ENCODE measurements at regions of chr7 and their contacts with region 1.

Region 1: GRCh38 chr7:77823787-77824186 is 25.2 kb downstream of the PHTF2 start:
- DNase-seq: no peak
- ATAC-seq: peak; percentile 34
- H3K4me3 ChIP-seq: peak overlapping the region; percentile 9 to 71 (median 38)
- H3K4me3 Mint-ChIP-seq: peak overlapping the region; percentile 86
- H3K27ac ChIP-seq: peak overlapping the region; percentile 87 to 90
- H3K27ac Mint-ChIP-seq: peak overlapping the region; percentile 98
- H3K4me1 ChIP-seq: peaks cover 58 to 66% of the 10 kb centered on the region in 2 donors
- H3K4me1 Mint-ChIP-seq: peaks cover 70% of the 10 kb centered on the region
- H3K27me3 ChIP-seq: no peaks in the 10 kb centered on the region
- H3K27me3 Mint-ChIP-seq: no peaks in the 10 kb centered on the region
- CTCF ChIP-seq: no peak

Region 2: DNA sequence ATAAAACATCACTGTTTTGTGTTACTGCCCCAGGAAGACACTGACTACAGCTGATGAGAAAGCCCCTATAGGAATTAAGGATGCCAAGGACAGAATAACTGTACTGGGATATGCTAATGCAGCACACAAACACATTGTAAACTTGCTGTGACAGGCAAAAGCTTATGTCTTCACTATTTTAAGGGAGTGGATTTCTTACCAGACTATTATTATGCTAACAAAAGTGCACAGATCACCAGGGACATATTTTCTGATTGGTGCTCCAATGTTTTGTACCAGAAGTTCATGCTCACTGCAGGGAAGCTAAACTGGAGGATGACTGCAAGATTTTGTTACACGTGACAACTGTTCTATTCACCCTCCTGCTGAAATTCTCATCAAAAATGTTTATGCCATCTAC is 334.8 kb before region 1 on chr7:
- CTCF ChIA-PET with region 1: no interaction called
- POLR2A ChIA-PET with region 1: no interaction called
- intact Hi-C with region 1: no loop called
- DNase-seq: no peak
- ATAC-seq: no peak
- H3K4me3 ChIP-seq: no peak overlapping the region
- H3K4me3 Mint-ChIP-seq: no peak overlapping the region
- H3K27ac ChIP-seq: no peak overlapping the region
- H3K27ac Mint-ChIP-seq: no peak overlapping the region
- H3K4me1 ChIP-seq: no peaks in the 10 kb centered on the region
- H3K4me1 Mint-ChIP-seq: no peaks in the 10 kb centered on the region
- H3K27me3 ChIP-seq: peaks cover 0 to 3% (median 0%) of the 10 kb centered on the region in 4 experiments
- H3K27me3 Mint-ChIP-seq: peaks cover 5% of the 10 kb centered on the region
- CTCF ChIP-seq: no peak

Region 3: DNA sequence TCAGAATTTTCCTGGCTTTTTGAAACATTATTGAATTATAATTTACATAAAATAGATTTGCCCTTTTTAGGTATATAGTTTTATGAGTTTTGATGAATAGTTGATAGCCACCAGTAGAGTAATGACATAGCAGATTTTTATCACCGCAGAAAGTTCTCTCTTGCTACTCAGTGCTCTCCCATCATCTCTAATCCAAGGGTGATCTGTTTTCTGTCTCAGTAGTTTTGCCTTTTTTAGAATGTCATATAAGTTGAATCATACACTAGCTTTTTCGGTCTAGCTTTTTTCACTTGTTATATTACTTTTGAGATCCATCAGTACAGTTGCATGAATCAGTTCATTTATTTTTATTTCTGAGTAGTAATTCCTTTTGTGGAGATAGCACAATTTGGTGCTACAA is 109.6 kb before region 1 on chr7:
- CTCF ChIA-PET with region 1: no interaction called
- POLR2A ChIA-PET with region 1: no interaction called
- intact Hi-C with region 1: no loop called
- DNase-seq: no peak
- ATAC-seq: no peak
- H3K4me3 ChIP-seq: no peak overlapping the region
- H3K4me3 Mint-ChIP-seq: no peak overlapping the region
- H3K27ac ChIP-seq: no peak overlapping the region
- H3K27ac Mint-ChIP-seq: no peak overlapping the region
- H3K4me1 ChIP-seq: no peaks in the 10 kb centered on the region
- H3K4me1 Mint-ChIP-seq: peaks cover 45% of the 10 kb centered on the region
- H3K27me3 ChIP-seq: no peaks in the 10 kb centered on the region
- H3K27me3 Mint-ChIP-seq: no peaks in the 10 kb centered on the region
- CTCF ChIP-seq: no peak

Region 4: GRCh38 chr7:77752021-77752420 is 71.8 kb before region 1 on chr7:
- CTCF ChIA-PET with region 1: no interaction called
- POLR2A ChIA-PET with region 1: no interaction called
- intact Hi-C with region 1: no loop called
- DNase-seq: no peak
- ATAC-seq: no peak
- H3K4me3 ChIP-seq: no peak overlapping the region
- H3K4me3 Mint-ChIP-seq: no peak overlapping the region
- H3K27ac ChIP-seq: no peak overlapping the region
- H3K27ac Mint-ChIP-seq: peak overlapping the region; percentile 5
- H3K4me1 ChIP-seq: peaks cover 3 to 4% of the 10 kb centered on the region in 2 donors
- H3K4me1 Mint-ChIP-seq: peaks cover 17% of the 10 kb centered on the region
- H3K27me3 ChIP-seq: no peaks in the 10 kb centered on the region
- H3K27me3 Mint-ChIP-seq: no peaks in the 10 kb centered on the region
- CTCF ChIP-seq: no peak

Region 5: DNA sequence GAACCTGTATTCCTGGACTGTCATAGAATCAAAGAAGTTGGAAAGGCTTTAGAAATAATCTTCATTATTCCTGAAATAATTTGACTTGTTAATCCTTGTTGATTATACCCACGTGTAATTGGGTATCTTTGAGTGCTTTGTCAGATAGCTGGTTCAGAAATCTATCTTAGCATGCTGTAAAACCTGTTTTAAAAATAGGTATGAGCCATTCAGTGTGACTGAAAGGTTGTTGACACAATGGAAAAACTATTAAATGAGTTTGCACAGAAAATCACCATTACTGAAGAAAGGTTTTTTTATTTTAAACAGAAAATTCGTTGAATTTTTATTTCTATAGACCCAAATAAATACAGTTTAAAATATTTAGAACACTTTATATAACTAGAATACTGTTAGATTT is 13.5 kb after region 1 on chr7:
- CTCF ChIA-PET with region 1: interaction called, 7 read pairs
- POLR2A ChIA-PET with region 1: interaction called, 4 read pairs
- intact Hi-C with region 1: loop called (anchors 2 kb)
- DNase-seq: no peak
- ATAC-seq: no peak
- H3K4me3 ChIP-seq: no peak overlapping the region
- H3K4me3 Mint-ChIP-seq: no peak overlapping the region
- H3K27ac ChIP-seq: no peak overlapping the region
- H3K27ac Mint-ChIP-seq: no peak overlapping the region
- H3K4me1 ChIP-seq: peaks cover 25 to 45% of the 10 kb centered on the region in 2 donors
- H3K4me1 Mint-ChIP-seq: peaks cover 59% of the 10 kb centered on the region
- H3K27me3 ChIP-seq: no peaks in the 10 kb centered on the region
- H3K27me3 Mint-ChIP-seq: no peaks in the 10 kb centered on the region
- CTCF ChIP-seq: no peak

Region 6: GRCh38 chr7:77855371-77856083 is 31.7 kb after region 1 on chr7:
- CTCF ChIA-PET with region 1: no interaction called
- POLR2A ChIA-PET with region 1: no interaction called
- intact Hi-C with region 1: loop called (anchors 5 kb)
- DNase-seq: no peak
- ATAC-seq: no peak
- H3K4me3 ChIP-seq: no peak overlapping the region
- H3K4me3 Mint-ChIP-seq: no peak overlapping the region
- H3K27ac ChIP-seq: peak overlapping the region in 1 of 2 donors; percentile 25
- H3K27ac Mint-ChIP-seq: peak overlapping the region; percentile 23
- H3K4me1 ChIP-seq: peaks cover 12 to 28% of the 10 kb centered on the region in 2 donors
- H3K4me1 Mint-ChIP-seq: peaks cover 60% of the 10 kb centered on the region
- H3K27me3 ChIP-seq: no peaks in the 10 kb centered on the region
- H3K27me3 Mint-ChIP-seq: no peaks in the 10 kb centered on the region
- CTCF ChIP-seq: no peak

Region 7: GRCh38 chr7:78020136-78020873 is 196.5 kb after region 1 on chr7:
- CTCF ChIA-PET with region 1: no interaction called
- POLR2A ChIA-PET with region 1: no interaction called
- intact Hi-C with region 1: no loop called
- DNase-seq: peak; percentile 67
- ATAC-seq: peak; percentile 44
- H3K4me3 ChIP-seq: peak overlapping the region; percentile 14 to 87 (median 77)
- H3K4me3 Mint-ChIP-seq: peak overlapping the region; percentile 85
- H3K27ac ChIP-seq: peak overlapping the region in 1 of 2 donors; percentile 52
- H3K27ac Mint-ChIP-seq: peak overlapping the region; percentile 72
- H3K4me1 ChIP-seq: peaks cover 11 to 12% of the 10 kb centered on the region in 2 donors
- H3K4me1 Mint-ChIP-seq: peaks cover 15% of the 10 kb centered on the region
- H3K27me3 ChIP-seq: peaks cover 0 to 2% (median 0%) of the 10 kb centered on the region in 4 experiments
- H3K27me3 Mint-ChIP-seq: peaks cover 9% of the 10 kb centered on the region
- CTCF ChIP-seq: peak; percentile 80

Measured in B cell (primary cell).